Activated naive CD8-positive, alpha-beta T cell treated with anti-CD3 and anti-CD28 coated beads, Interleukin-2, amount 10 ng/mL, durations not matched to agents 7 days and 5 days (primary cell): ENCODE measurements at regions of chr10 and their contacts with region 1.

Region 1: DNA sequence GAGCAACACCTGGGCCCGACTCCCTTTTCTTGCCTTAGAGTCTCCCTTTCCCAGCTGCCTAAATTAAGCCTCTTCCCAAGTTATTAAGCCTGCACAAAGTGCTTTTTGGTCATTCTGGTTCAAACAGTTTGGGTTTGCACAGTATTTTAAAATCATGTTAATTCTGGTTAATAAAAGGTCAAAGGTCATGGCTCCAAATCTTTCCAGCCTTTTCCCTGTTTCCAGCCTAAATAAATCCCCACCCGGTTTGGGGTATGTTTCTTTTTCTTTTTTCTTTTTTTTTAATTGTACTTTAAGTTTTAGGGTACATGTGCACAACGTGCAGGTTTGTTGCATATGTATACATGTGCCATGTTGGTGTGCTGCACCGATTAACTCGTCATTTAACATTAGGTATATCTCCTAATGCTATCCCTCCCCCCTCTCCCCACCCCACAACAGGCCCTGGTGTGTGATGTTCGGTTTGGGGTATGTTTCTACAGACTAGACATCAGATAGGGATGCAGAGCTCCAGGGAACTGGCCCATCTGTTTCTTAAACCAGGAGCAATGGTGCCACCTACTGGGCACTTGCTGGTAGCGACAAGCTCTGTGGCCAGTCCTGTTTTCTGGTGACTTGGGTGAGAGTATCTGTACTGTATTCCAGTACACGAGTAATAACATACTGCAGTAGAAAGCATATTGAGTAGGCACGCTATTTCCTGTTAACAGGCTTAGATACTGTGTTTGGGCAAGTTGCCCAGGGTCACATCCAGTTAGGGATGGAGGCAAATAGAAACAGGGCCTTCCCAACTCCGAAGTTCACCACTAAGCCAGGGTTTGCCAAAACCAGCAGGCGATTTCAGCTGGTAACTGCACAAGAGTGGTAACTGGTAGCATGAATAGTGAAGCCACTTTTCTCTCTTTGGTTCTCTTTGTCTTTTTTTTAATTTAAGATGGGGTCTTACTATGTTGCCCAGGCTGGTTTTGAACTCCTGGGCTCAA is 60.6 kb upstream of the TRIM8 start:
- DNase-seq: peak; percentile 79
- ATAC-seq: peak; percentile 96
- H3K4me3 Mint-ChIP-seq: no peak overlapping the region
- H3K27ac Mint-ChIP-seq: no peak overlapping the region
- H3K4me1 Mint-ChIP-seq: peaks cover 3% of the 10 kb centered on the region
- H3K27me3 Mint-ChIP-seq: no peaks in the 10 kb centered on the region

Region 2: GRCh38 chr10:102503281-102504220 is 80.2 kb before region 1 on chr10 and contains the start of gene SUFU:
- POLR2A ChIA-PET with region 1: interaction called, 17 read pairs
- DNase-seq: peak; percentile 96
- ATAC-seq: peak; percentile 70
- H3K4me3 Mint-ChIP-seq: no peak within 1 kb of the TSS
- H3K27ac Mint-ChIP-seq: peak within 1 kb of the TSS; percentile 81
- H3K4me1 Mint-ChIP-seq: peaks cover 25% of the 10 kb centered on the region
- H3K27me3 Mint-ChIP-seq: no peaks in the 10 kb centered on the region
- total RNA-seq, gene SUFU: 13.1 to 13.4 TPM